Left ventricle myocardium superior (tissue), 1 donor: ENCODE measurements at regions of chr6 and their contacts with region 1.

Region 1: GRCh38 chr6:43667245-43668150 is 20.1 kb downstream of the MRPS18A start:
- DNase-seq: peak; percentile 88
- ATAC-seq: peak; percentile 56

Region 2: DNA sequence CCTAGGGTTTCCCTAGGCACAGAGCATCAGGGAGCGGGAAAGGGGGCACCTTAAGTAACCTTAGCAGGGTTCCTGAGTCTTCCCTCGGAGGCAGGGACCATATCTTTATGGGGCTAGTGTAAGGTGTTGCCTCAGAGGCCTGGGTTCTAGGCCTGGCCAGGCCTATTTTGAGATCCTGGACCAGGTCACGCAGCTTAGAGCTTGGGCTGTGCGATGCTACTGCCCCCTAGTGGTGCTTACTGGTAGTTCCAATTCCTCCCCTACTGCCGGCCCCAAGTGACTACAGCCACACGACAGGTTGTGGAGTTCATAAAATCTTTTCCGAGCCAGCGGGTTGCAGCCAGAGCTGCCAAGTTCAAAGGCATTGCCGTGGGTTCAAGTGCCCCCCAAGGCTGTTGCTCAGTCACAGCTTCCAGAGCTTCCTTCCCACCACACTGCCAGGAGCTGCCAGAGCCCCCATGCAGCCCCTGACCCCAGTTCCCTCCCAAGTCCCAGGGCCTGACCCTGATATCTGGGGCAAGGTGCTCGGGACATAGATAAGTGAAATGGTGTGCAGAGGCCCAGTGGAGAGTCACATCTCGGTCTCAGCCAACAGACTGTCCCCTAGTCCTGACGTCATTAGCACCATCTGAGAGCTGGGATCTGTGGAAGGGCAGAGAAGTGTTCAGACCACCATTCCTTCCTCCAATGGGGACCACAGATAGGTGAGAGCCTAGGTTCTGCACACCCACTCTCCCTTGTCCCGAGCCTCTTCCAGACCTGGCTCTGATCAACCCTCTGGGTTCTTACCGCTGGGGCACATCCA is 160.6 kb before region 1 on chr6:
- intact Hi-C with region 1: no loop called
- DNase-seq: peak; percentile 75
- ATAC-seq: peak; percentile 46

Region 3: DNA sequence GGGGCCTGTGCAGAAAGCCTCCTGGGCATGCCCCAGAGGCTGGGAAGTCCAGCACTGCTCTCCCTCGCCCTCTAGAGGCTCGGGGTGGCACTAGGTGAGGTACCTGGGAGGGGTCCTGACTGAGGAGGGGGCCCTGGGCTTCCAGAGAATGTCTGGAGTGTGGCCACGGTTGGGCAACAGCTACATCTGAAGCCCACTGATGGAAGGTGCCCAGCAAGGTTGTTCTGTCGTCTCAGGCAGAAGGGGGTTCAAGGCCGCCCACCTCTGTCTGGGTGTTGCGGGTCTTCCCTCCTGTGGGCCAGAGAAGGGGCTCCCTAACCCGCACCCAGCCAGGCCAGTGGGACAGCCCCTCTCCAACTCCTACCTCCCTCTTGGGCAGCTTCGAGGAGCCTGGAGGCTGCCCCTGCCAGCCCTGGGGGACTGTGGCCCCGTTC is 91.1 kb after region 1 on chr6:
- intact Hi-C with region 1: loop called (anchors 5 kb)
- DNase-seq: peak; percentile 58
- ATAC-seq: peak; percentile 75

Region 4: DNA sequence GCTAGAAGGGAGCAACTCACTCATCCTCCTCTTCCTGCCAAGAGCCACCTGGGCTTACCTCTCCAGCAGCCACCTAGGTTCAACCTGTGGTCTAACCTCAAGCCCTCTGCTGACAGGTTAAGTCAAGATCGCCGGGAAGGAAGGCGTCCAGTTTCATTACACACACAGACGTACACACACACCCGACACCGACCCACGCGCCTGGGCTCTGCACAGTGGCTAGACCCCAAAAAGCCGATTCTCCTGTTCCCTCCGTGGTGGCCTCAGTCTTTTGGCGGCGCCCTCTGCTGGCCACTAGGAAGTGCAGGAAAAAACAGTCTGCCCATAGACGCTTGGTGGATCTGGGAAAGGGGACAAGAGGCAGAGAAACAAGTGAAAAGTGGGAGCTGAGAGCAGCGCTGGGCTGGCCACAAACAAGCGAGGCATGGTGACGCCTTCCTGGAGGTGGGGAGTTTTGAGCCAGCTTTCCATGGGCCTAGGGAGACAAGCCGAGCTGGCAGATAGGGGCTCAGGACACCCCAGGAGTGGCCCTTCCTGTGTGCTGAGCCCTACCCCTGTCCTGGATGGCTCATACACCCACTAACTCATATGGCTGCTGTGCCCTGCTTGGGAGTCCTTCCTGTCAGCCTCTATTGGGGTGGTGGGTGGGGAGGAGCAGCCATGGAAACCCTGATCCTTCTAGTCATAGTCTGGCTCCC is 407.1 kb after region 1 on chr6:
- intact Hi-C with region 1: loop called (anchors 5 kb)
- DNase-seq: peak; percentile 89
- ATAC-seq: peak; percentile 69